ENCODE measurements at regions of chr12 and their contacts with region 1.

Region 1: DNA sequence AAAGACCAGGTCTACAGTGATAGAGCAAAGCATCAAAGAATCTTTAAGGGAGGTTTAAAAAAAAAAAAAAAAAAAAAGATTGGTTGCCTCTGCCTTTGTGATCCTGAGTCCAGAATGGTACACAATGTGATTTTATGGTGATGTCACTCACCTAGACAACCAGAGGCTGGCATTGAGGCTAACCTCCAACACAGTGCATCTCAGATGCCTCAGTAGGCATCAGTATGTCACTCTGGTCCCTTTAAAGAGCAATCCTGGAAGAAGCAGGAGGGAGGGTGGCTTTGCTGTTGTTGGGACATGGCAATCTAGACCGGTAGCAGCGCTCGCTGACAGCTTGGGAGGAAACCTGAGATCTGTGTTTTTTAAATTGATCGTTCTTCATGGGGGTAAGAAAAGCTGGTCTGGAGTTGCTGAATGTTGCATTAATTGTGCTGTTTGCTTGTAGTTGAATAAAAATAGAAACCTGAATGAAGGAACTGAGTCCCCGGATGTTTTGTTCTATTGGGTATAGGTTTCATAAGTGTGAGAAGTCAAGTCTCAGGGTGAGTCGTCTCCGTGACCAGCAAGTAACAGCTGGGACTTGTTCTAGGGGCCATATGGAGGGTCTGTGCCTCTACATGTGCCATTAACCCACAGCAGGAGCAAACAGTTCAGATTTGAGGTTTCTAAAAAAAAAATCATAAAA is 9.3 kb downstream of the PEBP1 start:
- DNase-seq: no peak
- H3K4me3 ChIP-seq: no peak overlapping the region
- H3K27ac ChIP-seq: no peak overlapping the region
- H3K4me1 ChIP-seq: no peaks in the 10 kb centered on the region
- H3K27me3 ChIP-seq: no peaks in the 10 kb centered on the region
- CTCF ChIP-seq: no peak
- POLR2A ChIP-seq: no peak

Region 2: GRCh38 chr12:117190210-117190781 is 955.0 kb before region 1 on chr12 and contains the start of gene FBXO21:
- CTCF ChIA-PET with region 1: no interaction called
- POLR2A ChIA-PET with region 1: no interaction called
- dilution Hi-C with region 1: no loop called
- intact Hi-C with region 1: loop called (anchors 5 kb)
- DNase-seq: peak; percentile 84
- H3K4me3 ChIP-seq: peak within 1 kb of the TSS; percentile 59 to 100 (median 69)
- H3K27ac ChIP-seq: no peak within 1 kb of the TSS
- H3K4me1 ChIP-seq: peaks cover 9% of the 10 kb centered on the region
- H3K27me3 ChIP-seq: peaks cover 3 to 4% of the 10 kb centered on the region in 2 experiments
- CTCF ChIP-seq: no peak
- POLR2A ChIP-seq: peak; percentile 71
- total RNA-seq, gene FBXO21: 41.6 and 41.7 TPM in 2 replicates

Region 3: DNA sequence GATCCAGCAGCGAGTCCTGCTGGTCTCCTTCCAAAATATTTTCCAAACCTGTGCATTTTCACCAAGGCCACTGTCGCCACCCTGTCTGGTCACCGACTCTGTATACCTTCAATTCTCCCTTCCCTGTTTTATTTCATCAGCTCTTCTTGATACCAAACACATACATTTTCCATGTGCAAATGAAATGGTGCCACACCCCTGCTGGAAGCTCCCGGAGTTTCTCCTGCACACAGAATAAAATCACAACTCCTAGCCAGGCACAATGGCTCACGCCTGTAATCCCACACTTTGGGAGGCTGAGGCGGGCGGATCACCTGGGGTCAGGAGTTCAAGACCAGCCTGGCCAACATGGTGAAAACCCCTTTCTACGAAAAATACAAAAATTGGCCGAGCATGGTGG is 55.5 kb before region 1 on chr12:
- CTCF ChIA-PET with region 1: no interaction called
- POLR2A ChIA-PET with region 1: no interaction called
- dilution Hi-C with region 1: no loop called
- intact Hi-C with region 1: no loop called
- DNase-seq: no peak
- H3K4me3 ChIP-seq: no peak overlapping the region
- H3K27ac ChIP-seq: no peak overlapping the region
- H3K4me1 ChIP-seq: no peaks in the 10 kb centered on the region
- H3K27me3 ChIP-seq: no peaks in the 10 kb centered on the region
- CTCF ChIP-seq: no peak
- POLR2A ChIP-seq: no peak